Activated CD4-positive, alpha-beta T cell treated with anti-CD3 and anti-CD28 coated beads for 36 hours (primary cell): ENCODE measurements at regions of chr16 and their contacts with region 1.

Region 1: GRCh38 chr16:62105244-62105643 is 69.0 kb upstream of the CDH8 start:
- DNase-seq: no peak
- ATAC-seq: no peak
- H3K4me3 Mint-ChIP-seq: no peak overlapping the region
- H3K27ac Mint-ChIP-seq: no peak overlapping the region
- H3K4me1 Mint-ChIP-seq: no peaks in the 10 kb centered on the region
- H3K27me3 Mint-ChIP-seq: no peaks in the 10 kb centered on the region

Region 2: DNA sequence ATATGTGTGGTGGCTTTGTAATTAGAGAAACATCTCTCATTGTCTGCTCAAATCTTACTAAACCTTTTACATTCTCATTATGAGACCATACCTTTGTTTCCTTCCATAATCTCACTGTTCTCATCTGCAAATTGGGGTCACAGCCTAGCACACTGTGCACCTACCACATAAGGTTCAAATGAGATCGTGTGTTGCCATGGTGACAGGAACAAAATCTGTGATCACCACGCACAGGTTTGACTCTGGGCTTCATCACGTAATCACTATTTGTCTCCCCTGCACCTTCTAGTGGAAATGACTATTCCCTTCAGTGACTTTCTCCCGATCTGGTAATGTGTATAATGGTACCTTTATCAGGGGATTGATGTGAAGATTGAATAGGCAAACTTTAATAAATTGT is 95.1 kb before region 1 on chr16:
- CTCF ChIA-PET with region 1: no interaction called
- POLR2A ChIA-PET with region 1: no interaction called
- intact Hi-C with region 1: no loop called
- DNase-seq: no peak
- ATAC-seq: no peak
- H3K4me3 Mint-ChIP-seq: no peak overlapping the region
- H3K27ac Mint-ChIP-seq: no peak overlapping the region
- H3K4me1 Mint-ChIP-seq: no peaks in the 10 kb centered on the region
- H3K27me3 Mint-ChIP-seq: no peaks in the 10 kb centered on the region

Region 3: DNA sequence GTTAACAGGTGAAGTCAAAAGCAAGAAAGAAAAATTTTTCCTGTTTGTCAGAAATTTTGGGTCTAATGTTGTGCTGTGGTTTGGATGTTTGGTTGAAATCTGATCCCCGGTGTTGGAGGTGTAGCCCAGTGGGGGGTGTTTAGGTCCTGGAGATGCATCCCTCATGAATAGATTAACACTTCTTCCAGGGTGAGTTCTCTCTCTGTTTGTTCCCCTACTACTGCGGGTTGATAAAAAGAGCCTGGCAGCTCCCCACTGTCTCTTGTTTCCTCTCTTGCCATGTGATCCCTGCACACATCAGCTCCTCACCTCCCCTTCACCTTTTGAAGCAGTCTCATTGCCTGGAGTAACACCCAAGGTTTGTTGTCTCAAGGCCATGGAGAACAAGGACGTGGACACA is 54.5 kb before region 1 on chr16:
- CTCF ChIA-PET with region 1: no interaction called
- POLR2A ChIA-PET with region 1: no interaction called
- intact Hi-C with region 1: loop called in 1 of 2 experiments (anchors 10 kb)
- DNase-seq: no peak
- ATAC-seq: no peak
- H3K4me3 Mint-ChIP-seq: no peak overlapping the region
- H3K27ac Mint-ChIP-seq: no peak overlapping the region
- H3K4me1 Mint-ChIP-seq: no peaks in the 10 kb centered on the region
- H3K27me3 Mint-ChIP-seq: no peaks in the 10 kb centered on the region

Region 4: DNA sequence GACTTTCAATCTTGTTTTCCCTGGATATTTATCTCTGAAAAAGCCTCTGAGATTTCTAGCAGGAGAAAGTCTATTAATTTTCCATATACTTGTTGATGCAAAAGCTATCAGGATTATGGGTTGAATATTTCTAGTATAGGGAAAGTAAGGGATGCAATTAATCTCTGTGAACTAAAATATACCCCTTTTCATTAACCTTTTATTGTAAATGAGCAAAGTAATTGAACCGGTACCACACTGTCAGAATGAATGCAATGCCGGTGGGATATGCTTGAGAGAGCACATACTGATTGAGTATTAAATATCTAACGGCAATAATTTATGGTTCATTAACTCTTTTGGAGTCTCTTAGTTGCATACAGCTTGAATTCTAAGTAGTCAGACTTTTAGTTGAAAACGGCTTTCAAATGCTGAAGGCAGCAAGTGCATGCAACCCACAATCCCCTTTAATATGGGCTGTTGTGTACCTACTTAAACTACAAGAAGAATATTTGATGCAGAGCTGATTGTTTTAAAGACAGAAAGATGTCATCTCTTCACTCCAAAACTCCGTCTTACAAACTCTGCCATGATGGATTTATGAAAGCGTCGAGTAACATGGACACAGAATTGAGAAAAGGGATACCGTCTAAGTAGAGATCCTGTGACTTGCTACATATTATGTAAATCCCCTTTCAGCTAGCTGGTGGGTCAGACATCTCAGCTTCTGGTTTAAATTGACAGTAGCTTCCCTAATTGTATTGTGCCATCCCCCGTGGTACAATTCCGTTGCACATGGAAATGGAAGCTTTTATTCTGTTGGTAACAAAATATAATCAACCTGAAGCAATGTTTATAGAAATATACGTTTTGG is 72.3 kb after region 1 on chr16:
- CTCF ChIA-PET with region 1: no interaction called
- POLR2A ChIA-PET with region 1: no interaction called
- intact Hi-C with region 1: no loop called
- DNase-seq: no peak
- ATAC-seq: no peak
- H3K4me3 Mint-ChIP-seq: no peak overlapping the region
- H3K27ac Mint-ChIP-seq: no peak overlapping the region
- H3K4me1 Mint-ChIP-seq: no peaks in the 10 kb centered on the region
- H3K27me3 Mint-ChIP-seq: no peaks in the 10 kb centered on the region

Region 5: DNA sequence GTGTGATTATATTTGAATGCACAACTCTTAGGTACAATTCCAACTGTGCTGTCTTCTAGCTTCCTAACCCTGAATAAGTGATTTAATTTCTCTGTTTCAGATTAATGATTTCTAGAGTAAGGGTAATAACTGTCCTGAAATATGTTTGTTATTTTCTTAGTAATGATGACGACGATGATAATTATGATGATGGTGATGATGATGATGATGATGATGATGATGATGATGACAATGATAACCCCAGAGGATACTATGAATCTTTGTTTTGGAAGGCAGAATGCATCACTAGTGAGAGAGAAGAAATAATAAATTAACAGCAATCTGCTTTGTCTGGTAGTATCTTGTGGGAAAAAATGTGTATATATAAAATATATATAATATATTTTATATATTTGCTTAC is 248.1 kb after region 1 on chr16:
- CTCF ChIA-PET with region 1: no interaction called
- POLR2A ChIA-PET with region 1: no interaction called
- intact Hi-C with region 1: no loop called
- DNase-seq: no peak
- ATAC-seq: no peak
- H3K4me3 Mint-ChIP-seq: no peak overlapping the region
- H3K27ac Mint-ChIP-seq: no peak overlapping the region
- H3K4me1 Mint-ChIP-seq: no peaks in the 10 kb centered on the region
- H3K27me3 Mint-ChIP-seq: no peaks in the 10 kb centered on the region